Upper lobe of right lung (tissue), 1 donor: ENCODE measurements at regions of chr3 and their contacts with region 1.

Region 1: GRCh38 chr3:126982471-126983175 is at the start of gene PLXNA1:
- DNase-seq: peak; percentile 92
- ATAC-seq: peak; percentile 93
- H3K4me3 ChIP-seq: peak within 1 kb of the TSS; percentile 77
- H3K27ac ChIP-seq: peak within 1 kb of the TSS; percentile 81
- H3K4me1 ChIP-seq: peaks cover 7% of the 10 kb centered on the region
- H3K27me3 ChIP-seq: no peaks in the 10 kb centered on the region
- CTCF ChIP-seq: peak; percentile 96
- total RNA-seq, gene PLXNA1: 53.5 TPM

Region 2: DNA sequence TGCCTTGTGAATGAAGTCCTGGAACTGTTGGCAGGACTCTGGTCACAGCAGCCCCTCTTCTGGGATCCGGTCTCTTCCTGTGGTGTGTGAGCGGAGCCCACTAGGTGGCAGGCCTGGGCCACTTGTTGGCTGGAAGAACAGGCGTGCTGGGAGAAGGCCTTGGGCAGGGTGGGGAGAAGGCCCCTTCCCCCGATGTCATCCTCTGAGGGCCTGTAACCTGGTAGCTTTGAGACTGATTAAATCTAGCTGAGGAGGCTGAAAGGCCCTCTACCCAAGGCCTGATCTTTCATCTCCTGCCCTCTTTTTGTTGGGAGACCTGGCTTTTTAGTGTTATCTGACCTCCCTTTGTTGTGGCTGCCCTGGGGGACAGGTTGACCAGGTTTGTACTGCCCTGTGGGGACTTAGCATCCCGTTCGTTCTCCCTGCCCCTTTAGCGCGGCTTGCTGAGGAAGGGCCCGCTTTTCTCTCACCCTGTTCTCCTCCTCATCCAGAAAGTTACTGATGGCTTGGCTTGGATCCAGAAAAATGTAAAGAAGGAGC is 230.2 kb before region 1 on chr3:
- intact Hi-C with region 1: loop called (anchors 10 kb)
- DNase-seq: peak; percentile 87
- ATAC-seq: peak; percentile 85
- H3K4me3 ChIP-seq: no peak overlapping the region
- H3K27ac ChIP-seq: peak overlapping the region; percentile 30
- H3K4me1 ChIP-seq: peaks cover 9% of the 10 kb centered on the region
- H3K27me3 ChIP-seq: no peaks in the 10 kb centered on the region
- CTCF ChIP-seq: peak; percentile 87